WTC11 (cell line): ENCODE measurements at regions of chr17 and their contacts with region 1.

Region 1: DNA sequence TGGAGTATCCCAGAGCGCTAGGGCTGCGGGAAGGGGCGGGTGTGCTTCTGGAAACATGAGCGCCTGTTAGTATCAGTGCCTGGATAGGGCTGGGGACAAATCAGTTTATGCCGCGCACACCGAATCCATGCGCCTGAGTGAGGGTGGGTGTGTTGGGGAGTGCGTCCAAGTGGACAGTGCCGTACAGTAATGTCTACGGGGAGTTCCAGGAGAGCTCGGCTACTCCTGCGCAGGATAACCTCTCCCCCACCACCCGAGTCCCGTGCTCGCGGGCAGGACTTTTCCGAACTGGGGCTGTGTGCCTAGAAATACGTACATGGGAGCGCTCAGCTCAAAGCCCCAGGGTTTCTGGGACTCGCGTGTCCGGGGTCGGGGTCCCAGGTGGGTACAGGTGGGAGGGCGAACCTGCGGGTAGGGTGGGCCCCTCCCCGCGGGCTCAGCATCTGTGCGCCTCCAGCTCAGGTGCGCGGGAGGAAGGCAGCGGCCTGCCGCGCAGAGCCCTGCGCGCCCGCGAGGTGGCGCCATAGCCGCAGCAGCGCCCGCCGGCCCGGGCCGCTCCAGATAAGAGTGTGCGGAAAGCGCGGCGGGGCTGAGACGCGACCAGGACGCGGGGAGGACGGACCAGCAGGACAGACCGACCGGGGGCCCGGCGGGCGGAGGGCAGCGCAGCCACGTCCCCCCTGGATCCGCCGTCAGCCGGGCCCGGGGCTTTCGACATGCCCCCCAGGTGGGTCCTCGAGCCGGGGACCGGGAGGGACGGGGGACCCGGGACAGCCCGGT is at the start of gene HIC1:
- DNase-seq: peak; percentile 80
- ATAC-seq: peak; percentile 28
- H3K4me3 Mint-ChIP-seq: peak within 1 kb of the TSS; percentile 60
- H3K27ac Mint-ChIP-seq: no peak within 1 kb of the TSS
- H3K4me1 Mint-ChIP-seq: peaks cover 4% of the 10 kb centered on the region
- H3K27me3 Mint-ChIP-seq: peaks cover 68% of the 10 kb centered on the region
- CTCF ChIP-seq: peak; percentile 86
- total RNA-seq, gene HIC1: 0.37 to 0.46 TPM (median 0.39 TPM) in 3 replicates

Region 2: GRCh38 chr17:1989135-1989534 is 65.6 kb before region 1 on chr17:
- CTCF ChIA-PET with region 1: no interaction called
- POLR2A ChIA-PET with region 1: no interaction called
- DNase-seq: no peak
- ATAC-seq: no peak
- H3K4me3 Mint-ChIP-seq: no peak overlapping the region
- H3K27ac Mint-ChIP-seq: no peak overlapping the region
- H3K4me1 Mint-ChIP-seq: peaks cover 10% of the 10 kb centered on the region
- H3K27me3 Mint-ChIP-seq: no peaks in the 10 kb centered on the region; the same call in 1 of the 2 replicates
- CTCF ChIP-seq: no peak

Region 3: GRCh38 chr17:2025622-2026310 is 28.9 kb before region 1 on chr17:
- CTCF ChIA-PET with region 1: interaction called, 27 read pairs
- POLR2A ChIA-PET with region 1: no interaction called
- DNase-seq: peak; percentile 62
- ATAC-seq: no peak
- H3K4me3 Mint-ChIP-seq: peak overlapping the region; percentile 67
- H3K27ac Mint-ChIP-seq: no peak overlapping the region
- H3K4me1 Mint-ChIP-seq: peaks cover 4% of the 10 kb centered on the region
- H3K27me3 Mint-ChIP-seq: peaks cover 85% of the 10 kb centered on the region
- CTCF ChIP-seq: no peak

Region 4: GRCh38 chr17:2075336-2076086 is 20.8 kb after region 1 on chr17:
- CTCF ChIA-PET with region 1: interaction called, 96 read pairs
- POLR2A ChIA-PET with region 1: no interaction called
- DNase-seq: peak; percentile 28
- ATAC-seq: peak; percentile 59
- H3K4me3 Mint-ChIP-seq: no peak overlapping the region
- H3K27ac Mint-ChIP-seq: peak overlapping the region; percentile 90
- H3K4me1 Mint-ChIP-seq: peaks cover 19% of the 10 kb centered on the region
- H3K27me3 Mint-ChIP-seq: no peaks in the 10 kb centered on the region
- CTCF ChIP-seq: no peak

Region 5: GRCh38 chr17:2137342-2138098 is 82.8 kb after region 1 on chr17:
- CTCF ChIA-PET with region 1: interaction called, 17 read pairs
- POLR2A ChIA-PET with region 1: no interaction called
- DNase-seq: peak; percentile 60
- ATAC-seq: peak; percentile 96
- H3K4me3 Mint-ChIP-seq: peak overlapping the region; percentile 39
- H3K27ac Mint-ChIP-seq: peak overlapping the region; percentile 94
- H3K4me1 Mint-ChIP-seq: peaks cover 38% of the 10 kb centered on the region
- H3K27me3 Mint-ChIP-seq: no peaks in the 10 kb centered on the region
- CTCF ChIP-seq: no peak

Region 6: DNA sequence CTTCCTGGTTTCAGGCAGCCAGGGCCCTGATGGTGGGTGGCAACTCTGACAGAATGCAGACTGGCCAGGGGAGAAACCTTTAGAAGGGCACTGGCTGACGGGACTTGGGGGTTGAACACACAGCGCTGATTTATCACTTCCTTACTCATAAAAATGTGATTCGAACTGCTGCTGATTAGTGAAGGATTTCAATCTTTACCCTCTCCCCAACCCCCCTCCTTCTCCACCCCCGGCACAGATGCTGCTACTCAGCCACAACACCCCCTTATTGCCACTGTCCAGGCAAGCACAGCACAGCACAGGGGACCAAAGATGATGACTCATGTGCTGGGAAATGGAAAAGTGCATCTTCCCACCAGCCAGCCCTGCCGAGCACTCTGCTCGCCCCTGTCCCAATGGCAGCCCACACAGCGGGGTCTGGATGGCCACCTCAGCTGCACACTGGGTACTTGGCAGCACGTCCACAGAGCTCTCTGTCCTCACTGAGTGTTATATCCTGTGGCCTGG is 178.8 kb after region 1 on chr17:
- CTCF ChIA-PET with region 1: interaction called, 31 read pairs
- POLR2A ChIA-PET with region 1: no interaction called
- DNase-seq: no peak
- ATAC-seq: no peak
- H3K4me3 Mint-ChIP-seq: no peak overlapping the region
- H3K27ac Mint-ChIP-seq: no peak overlapping the region
- H3K4me1 Mint-ChIP-seq: no peaks in the 10 kb centered on the region
- H3K27me3 Mint-ChIP-seq: no peaks in the 10 kb centered on the region
- CTCF ChIP-seq: no peak

Region 7: DNA sequence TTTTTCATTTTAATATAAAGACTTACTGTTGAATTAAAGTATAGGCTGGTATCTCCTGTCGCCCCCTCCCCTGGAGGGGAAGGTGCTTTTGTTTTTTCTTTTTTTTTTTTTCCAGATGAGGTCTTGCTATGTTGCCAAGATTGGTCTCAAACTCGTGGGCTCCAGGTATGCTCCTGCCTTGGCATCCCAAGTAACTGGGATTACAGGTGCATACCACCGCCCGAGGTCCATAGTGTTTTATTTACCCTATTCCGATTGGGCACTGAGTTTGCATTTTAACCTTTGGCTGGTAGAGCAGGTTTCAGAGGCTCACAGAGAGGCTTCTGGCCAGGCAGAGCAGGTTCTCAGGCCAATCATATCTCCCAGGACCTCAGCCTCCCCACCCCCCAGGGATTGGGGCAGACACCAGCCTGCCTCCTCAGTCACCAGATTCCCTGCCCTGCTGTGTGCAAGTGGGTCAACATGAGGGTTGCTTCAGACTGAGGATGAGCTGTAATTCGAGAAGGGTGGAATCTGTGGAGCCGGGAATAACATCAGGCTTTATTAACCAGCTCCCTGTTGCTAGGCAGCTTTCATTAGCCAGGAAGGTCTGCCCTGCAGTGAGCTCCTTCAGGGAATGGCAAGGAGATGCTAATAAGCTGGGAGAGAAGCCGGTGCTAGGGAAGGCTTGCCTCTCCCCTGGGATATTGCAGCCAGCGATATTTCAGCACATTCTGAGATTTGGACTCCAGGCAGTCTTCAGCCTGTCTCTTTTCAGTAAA is 293.0 kb after region 1 on chr17:
- CTCF ChIA-PET with region 1: interaction called, 14 read pairs
- POLR2A ChIA-PET with region 1: no interaction called
- DNase-seq: peak; percentile 83
- ATAC-seq: peak; percentile 94
- H3K4me3 Mint-ChIP-seq: peak overlapping the region; percentile 61
- H3K27ac Mint-ChIP-seq: peak overlapping the region; percentile 99
- H3K4me1 Mint-ChIP-seq: peaks cover 32% of the 10 kb centered on the region
- H3K27me3 Mint-ChIP-seq: no peaks in the 10 kb centered on the region
- CTCF ChIP-seq: no peak